Adrenal gland (tissue), 19 donors: ENCODE measurements at regions of chr7 and their contacts with region 1.

Region 1: GRCh38 chr7:74183613-74184450 is 9.7 kb downstream of the EIF4H start:
- DNase-seq: no peak
- H3K4me3 ChIP-seq: no peak overlapping the region
- H3K27ac ChIP-seq: peak overlapping the region in 2 of 5 donors; percentile 27 to 53
- H3K4me1 ChIP-seq: peaks cover 53 to 96% of the 10 kb centered on the region in 2 donors
- H3K27me3 ChIP-seq: no peaks in the 10 kb centered on the region
- CTCF ChIP-seq: peak in 2 of 6 experiments; percentile 2 to 8
- POLR2A ChIP-seq: no peak

Region 2: DNA sequence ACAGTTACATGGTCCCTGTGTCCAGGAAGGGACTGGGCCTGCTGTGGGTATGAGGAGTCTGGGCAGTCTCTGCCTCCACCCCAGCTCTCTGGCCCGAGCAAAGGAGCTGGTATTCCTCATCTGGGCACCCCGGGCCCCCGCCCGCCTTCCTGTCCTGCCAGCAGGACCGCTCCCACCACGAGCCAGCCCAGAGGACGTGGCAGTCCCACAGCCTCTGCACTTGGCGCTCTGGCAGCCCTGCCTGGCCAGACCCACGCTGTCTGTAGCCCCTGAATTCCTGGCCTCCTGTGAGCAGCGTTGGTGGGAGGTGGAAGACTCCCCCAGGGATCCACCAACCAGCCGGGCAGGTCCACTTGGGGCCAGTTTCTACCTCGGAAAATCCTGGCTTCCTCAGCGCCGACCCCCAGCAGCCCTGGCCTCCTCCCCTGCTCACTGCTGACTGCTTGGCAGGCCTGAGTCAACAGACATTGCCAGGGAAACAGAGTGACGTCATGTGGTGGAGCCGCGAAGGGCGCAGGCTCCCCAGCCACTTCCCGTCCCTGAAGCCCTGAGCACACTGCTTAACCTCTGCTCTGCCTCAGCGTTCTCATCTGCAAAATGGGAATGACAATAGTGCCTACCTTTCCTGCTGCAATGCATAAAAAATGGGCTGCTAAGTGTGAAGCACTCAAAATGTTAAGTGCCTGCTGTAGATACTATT is 121.8 kb before region 1 on chr7:
- intact Hi-C with region 1: loop called in 1 of 2 experiments (anchors 10 kb)
- DNase-seq: peak; percentile 88 to 94 (median 92)
- H3K4me3 ChIP-seq: peak overlapping the region in 1 of 4 donors; percentile 11
- H3K27ac ChIP-seq: peak overlapping the region in 4 of 5 donors; percentile 37 to 89 (median 64)
- H3K4me1 ChIP-seq: peaks cover 4 to 13% of the 10 kb centered on the region in 2 donors
- H3K27me3 ChIP-seq: no peaks in the 10 kb centered on the region
- CTCF ChIP-seq: no peak
- POLR2A ChIP-seq: peak in 1 of 2 donors; percentile 40

Region 3: GRCh38 chr7:74068393-74069085 is 115.3 kb before region 1 on chr7:
- intact Hi-C with region 1: loop called (anchors 5 to 10 kb)
- DNase-seq: no peak
- H3K4me3 ChIP-seq: no peak overlapping the region
- H3K27ac ChIP-seq: no peak overlapping the region
- H3K4me1 ChIP-seq: no peaks in the 10 kb centered on the region
- H3K27me3 ChIP-seq: no peaks in the 10 kb centered on the region
- CTCF ChIP-seq: no peak
- POLR2A ChIP-seq: no peak

Region 4: DNA sequence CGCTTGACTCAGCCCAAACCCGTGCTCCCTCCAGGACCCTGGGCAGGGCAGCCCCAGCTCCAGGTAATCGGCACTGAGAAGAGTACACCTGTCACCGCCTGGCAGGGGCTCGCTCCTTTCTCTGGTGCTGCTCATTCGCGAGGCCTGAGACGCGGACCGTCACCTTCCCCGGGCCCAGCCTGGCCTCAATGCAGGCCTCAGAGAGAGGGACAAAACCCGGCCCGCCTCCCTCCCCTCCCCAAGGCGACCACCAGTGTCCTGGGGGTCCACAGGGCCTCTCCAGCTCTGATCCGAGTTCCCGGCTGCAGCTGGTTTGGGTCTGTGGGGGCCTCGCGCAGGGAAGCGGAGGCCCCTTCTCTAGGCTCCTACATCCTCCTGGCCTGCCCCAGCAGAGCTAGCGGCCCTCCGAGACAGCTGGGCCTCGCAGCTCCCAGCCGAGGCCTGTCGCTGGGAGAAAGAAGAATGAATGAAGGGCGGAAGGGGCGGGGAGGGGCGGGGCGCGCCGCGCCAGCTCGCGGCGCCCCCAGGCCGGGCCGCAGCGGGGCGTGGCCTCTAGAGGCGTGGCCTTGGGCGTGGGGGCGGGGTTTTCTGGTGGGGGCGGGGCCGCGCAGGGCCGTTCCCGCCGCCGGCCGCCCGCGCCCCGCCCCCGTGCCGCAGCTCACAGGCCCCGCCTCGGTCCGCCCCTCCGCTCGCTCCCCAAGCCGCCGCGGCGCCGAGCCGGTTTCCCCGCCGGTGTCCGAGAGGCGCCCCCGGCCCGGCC is 100.5 kb before region 1 on chr7 and contains the start of gene LIMK1:
- intact Hi-C with region 1: loop called in 1 of 2 experiments (anchors 5 kb)
- DNase-seq: peak; percentile 67 to 82 (median 80)
- H3K4me3 ChIP-seq: peak within 1 kb of the TSS in 2 of 4 donors; percentile 73 to 79
- H3K27ac ChIP-seq: peak within 1 kb of the TSS in 3 of 5 donors; percentile 10 to 75 (median 57)
- H3K4me1 ChIP-seq: peaks cover 16 to 21% of the 10 kb centered on the region in 2 donors
- H3K27me3 ChIP-seq: no peaks in the 10 kb centered on the region
- CTCF ChIP-seq: no peak
- POLR2A ChIP-seq: peak in 1 of 2 donors; percentile 19
- total RNA-seq, gene LIMK1: 17.7 to 32.1 (median 21.8) TPM

Region 5: DNA sequence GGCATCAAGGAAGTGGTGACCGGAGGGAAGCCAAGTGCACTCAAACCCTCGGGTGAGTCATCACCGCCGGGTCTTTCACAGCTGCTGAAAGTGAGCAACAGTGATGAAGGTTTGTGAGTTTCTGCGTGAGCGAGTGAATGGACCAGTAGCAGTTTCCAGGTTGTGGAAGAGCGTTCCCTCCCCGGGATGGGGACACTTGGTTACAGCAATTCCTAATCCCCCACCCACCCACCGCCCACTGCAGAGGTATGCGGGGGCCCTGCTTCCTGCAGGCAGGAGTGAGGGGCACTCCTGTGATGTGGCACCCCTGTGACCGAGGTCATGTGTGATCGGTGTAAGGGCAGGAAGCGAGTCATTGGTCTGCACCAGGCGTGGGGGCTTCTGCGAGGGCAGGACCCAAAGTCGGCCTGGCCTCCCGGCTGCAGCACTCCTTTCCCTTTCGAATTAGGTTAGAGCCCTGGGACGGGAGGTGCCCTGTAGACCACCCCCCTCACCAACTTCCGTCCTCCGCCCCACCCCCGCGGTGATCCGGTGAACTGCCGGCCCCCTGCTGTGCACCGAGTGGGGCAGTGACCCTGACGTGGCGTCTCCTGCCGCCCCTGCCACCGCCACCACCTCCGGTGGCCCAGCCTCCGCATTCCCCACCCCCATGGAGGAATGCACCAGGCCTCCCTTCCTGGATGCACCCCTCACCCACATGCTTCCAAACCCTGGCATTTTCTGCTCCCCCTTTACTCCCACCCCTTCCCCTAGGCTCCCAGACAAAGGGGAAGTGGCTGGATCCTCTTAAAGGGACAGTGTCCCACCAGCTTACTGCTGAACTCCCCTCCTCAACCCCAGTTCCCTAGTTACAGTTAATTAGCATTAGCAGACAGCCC is 89.4 kb before region 1 on chr7:
- intact Hi-C with region 1: loop called in 1 of 2 experiments (anchors 10 kb)
- DNase-seq: peak; percentile 70 to 93 (median 87)
- H3K4me3 ChIP-seq: peak overlapping the region in 2 of 4 donors; percentile 29 to 52
- H3K27ac ChIP-seq: peak overlapping the region in 3 of 5 donors; percentile 36 to 84 (median 67)
- H3K4me1 ChIP-seq: peaks cover 5 to 26% of the 10 kb centered on the region in 2 donors
- H3K27me3 ChIP-seq: no peaks in the 10 kb centered on the region
- CTCF ChIP-seq: peak in 1 of 6 experiments; percentile 12
- POLR2A ChIP-seq: peak in 1 of 2 donors; percentile 38